MCF 10A (cell line): ENCODE measurements at regions of chr5 and their contacts with region 1.

Region 1: GRCh38 chr5:139968547-139969261 is 74.4 kb downstream of the NRG2 start:
- DNase-seq: peak; percentile 89
- H3K4me3 Mint-ChIP-seq: no peak overlapping the region
- H3K27ac Mint-ChIP-seq: no peak overlapping the region
- H3K4me1 Mint-ChIP-seq: no peaks in the 10 kb centered on the region
- H3K27me3 Mint-ChIP-seq: no peaks in the 10 kb centered on the region
- CTCF ChIP-seq: peak; percentile 100

Region 2: DNA sequence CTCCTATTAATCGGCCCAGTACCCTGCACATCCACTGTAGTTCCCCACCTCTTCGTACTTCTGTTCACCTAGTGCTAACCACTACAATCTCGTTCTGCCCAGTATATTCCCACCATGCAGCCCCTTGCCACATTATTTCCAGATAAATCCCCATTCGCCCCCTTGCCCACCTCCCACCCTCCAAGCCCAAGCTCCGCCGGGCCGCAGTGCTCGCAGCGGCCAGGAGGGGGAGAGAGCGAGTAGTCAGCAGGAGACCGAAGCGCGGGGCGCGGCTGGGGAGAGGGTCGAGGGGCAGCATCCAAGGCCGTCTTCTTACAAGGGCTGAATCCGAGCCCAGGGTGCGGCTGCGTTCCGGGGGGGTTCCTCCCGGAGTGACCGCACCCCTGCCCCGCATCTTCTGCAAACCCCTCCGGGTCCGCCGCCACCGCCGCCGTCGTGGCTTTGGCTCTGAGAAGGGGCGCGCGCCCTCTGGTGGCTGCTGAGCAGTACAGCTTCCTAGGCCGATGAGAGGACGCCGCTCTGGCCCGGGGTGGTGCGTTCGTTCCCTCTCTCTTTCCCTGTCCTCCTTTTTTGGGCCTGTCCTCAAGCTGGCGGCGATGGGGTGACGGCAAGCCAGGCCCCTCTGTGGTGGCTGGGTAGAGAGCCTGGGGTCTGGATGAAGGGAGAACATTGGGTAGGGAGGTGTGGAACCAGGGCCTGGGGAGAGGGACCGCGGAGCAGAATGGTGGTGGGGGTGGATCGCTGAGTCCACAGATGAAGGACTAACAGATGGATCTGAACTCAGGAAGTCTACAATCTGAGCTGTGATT is 203.1 kb before region 1 on chr5:
- CTCF ChIA-PET with region 1: interaction called, 35 read pairs
- POLR2A ChIA-PET with region 1: no interaction called
- intact Hi-C with region 1: no loop called
- DNase-seq: peak; percentile 85
- H3K4me3 Mint-ChIP-seq: peak overlapping the region; percentile 54
- H3K27ac Mint-ChIP-seq: no peak overlapping the region
- H3K4me1 Mint-ChIP-seq: peaks cover 13% of the 10 kb centered on the region
- H3K27me3 Mint-ChIP-seq: no peaks in the 10 kb centered on the region
- CTCF ChIP-seq: peak; percentile 98

Region 3: GRCh38 chr5:139837631-139838422 is 130.9 kb before region 1 on chr5:
- CTCF ChIA-PET with region 1: interaction called, 52 read pairs
- POLR2A ChIA-PET with region 1: no interaction called
- intact Hi-C with region 1: no loop called
- DNase-seq: no peak
- H3K4me3 Mint-ChIP-seq: no peak overlapping the region
- H3K27ac Mint-ChIP-seq: no peak overlapping the region
- H3K4me1 Mint-ChIP-seq: no peaks in the 10 kb centered on the region
- H3K27me3 Mint-ChIP-seq: peaks cover 51% of the 10 kb centered on the region
- CTCF ChIP-seq: no peak

Region 4: GRCh38 chr5:139882961-139883539 is 85.7 kb before region 1 on chr5:
- CTCF ChIA-PET with region 1: interaction called, 31 read pairs
- POLR2A ChIA-PET with region 1: no interaction called
- intact Hi-C with region 1: no loop called
- DNase-seq: peak; percentile 46
- H3K4me3 Mint-ChIP-seq: no peak overlapping the region
- H3K27ac Mint-ChIP-seq: no peak overlapping the region
- H3K4me1 Mint-ChIP-seq: no peaks in the 10 kb centered on the region
- H3K27me3 Mint-ChIP-seq: no peaks in the 10 kb centered on the region
- CTCF ChIP-seq: no peak

Region 5: GRCh38 chr5:139925650-139926640 is 42.8 kb before region 1 on chr5:
- CTCF ChIA-PET with region 1: interaction called, 13 read pairs
- POLR2A ChIA-PET with region 1: no interaction called
- intact Hi-C with region 1: no loop called
- DNase-seq: no peak
- H3K4me3 Mint-ChIP-seq: no peak overlapping the region
- H3K27ac Mint-ChIP-seq: no peak overlapping the region
- H3K4me1 Mint-ChIP-seq: no peaks in the 10 kb centered on the region
- H3K27me3 Mint-ChIP-seq: peaks cover 46% of the 10 kb centered on the region
- CTCF ChIP-seq: no peak

Region 6: GRCh38 chr5:140010798-140011197 is 42.1 kb after region 1 on chr5:
- CTCF ChIA-PET with region 1: interaction called, 21 read pairs
- POLR2A ChIA-PET with region 1: no interaction called
- intact Hi-C with region 1: no loop called
- DNase-seq: no peak
- H3K4me3 Mint-ChIP-seq: no peak overlapping the region
- H3K27ac Mint-ChIP-seq: no peak overlapping the region
- H3K4me1 Mint-ChIP-seq: no peaks in the 10 kb centered on the region
- H3K27me3 Mint-ChIP-seq: peaks cover 15% of the 10 kb centered on the region
- CTCF ChIP-seq: no peak

Region 7: DNA sequence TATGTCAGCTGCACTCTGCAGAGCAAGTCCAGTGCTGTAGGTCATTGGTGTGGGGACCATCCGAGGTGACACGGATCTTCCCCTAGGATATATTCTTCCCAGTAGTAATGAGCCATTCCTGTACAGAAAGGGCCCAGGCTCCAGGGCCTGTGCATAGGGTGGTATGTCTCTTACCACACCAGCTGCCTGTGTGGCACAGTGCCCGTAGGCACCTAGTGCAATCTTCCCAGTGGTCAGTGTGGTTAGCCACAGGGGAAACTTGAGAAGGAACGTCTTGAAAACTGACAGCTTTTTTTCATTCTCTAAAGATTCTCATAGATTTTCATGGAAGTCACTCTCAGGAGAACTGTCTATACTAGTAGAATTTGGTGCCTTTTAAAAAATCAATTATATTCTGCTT is 246.1 kb after region 1 on chr5:
- CTCF ChIA-PET with region 1: no interaction called
- POLR2A ChIA-PET with region 1: no interaction called
- intact Hi-C with region 1: no loop called
- DNase-seq: peak; percentile 89
- H3K4me3 Mint-ChIP-seq: no peak overlapping the region
- H3K27ac Mint-ChIP-seq: no peak overlapping the region
- H3K4me1 Mint-ChIP-seq: peaks cover 17% of the 10 kb centered on the region
- H3K27me3 Mint-ChIP-seq: no peaks in the 10 kb centered on the region
- CTCF ChIP-seq: no peak